ENCODE measurements at regions of chr1 and their contacts with region 1.

Region 1: GRCh38 chr1:234722904-234723720 is 113.1 kb upstream of the IRF2BP2 start:
- DNase-seq: peak; percentile 47
- ATAC-seq: no peak
- H3K4me3 Mint-ChIP-seq: peak overlapping the region; percentile 66
- H3K27ac Mint-ChIP-seq: peak overlapping the region; percentile 93
- H3K4me1 Mint-ChIP-seq: peaks cover 70% of the 10 kb centered on the region
- H3K27me3 Mint-ChIP-seq: no peaks in the 10 kb centered on the region

Region 2: DNA sequence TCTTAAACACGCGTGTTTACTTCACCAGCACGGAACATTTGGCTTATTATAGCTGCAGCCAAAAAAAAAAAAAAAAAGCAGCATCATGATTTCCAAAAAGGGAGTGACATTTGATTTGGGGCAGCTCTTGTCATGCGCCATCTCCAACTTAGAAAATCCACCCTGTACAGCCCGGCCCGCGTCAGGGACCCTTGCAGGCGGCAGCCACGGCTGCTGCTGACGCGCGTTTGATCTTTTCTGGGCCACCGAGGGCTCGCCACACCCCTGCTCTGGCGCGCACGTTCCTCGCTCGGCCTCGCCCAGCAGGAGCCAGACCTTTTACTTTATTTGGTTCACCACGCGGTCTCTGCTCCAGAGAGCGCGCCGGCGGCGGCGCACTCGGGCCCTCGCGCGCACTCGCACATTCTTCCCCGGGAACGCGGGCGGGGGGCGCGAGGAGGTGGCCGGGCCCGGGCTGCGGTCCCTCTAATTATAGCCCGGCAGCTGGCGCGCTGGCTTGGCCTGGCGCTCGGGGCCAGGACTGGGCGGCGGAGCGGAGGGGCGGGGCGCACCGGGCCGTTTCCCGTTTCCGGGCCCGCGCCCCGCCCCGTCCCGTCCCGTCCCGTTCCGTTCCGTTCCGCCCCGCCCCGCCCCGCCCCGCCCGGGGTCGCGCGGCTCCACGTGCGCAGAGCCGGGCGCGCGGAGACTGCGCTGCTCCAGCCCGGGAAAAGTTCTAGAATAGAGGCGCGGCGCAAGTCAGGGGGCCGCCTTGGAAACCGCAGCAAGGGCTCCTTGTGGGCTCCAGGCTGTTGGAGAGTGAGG is 123.3 kb before region 1 on chr1:
- CTCF ChIA-PET with region 1: interaction called, 11 read pairs
- POLR2A ChIA-PET with region 1: interaction called, 8 read pairs
- DNase-seq: peak; percentile 81
- ATAC-seq: peak; percentile 72
- H3K4me3 Mint-ChIP-seq: peak overlapping the region; percentile 85
- H3K27ac Mint-ChIP-seq: peak overlapping the region; percentile 95
- H3K4me1 Mint-ChIP-seq: peaks cover 57% of the 10 kb centered on the region
- H3K27me3 Mint-ChIP-seq: no peaks in the 10 kb centered on the region

Region 3: GRCh38 chr1:234772345-234773147 is 49.4 kb after region 1 on chr1:
- CTCF ChIA-PET with region 1: interaction called, 4 read pairs
- POLR2A ChIA-PET with region 1: interaction called, 23 read pairs
- DNase-seq: peak; percentile 93
- ATAC-seq: peak; percentile 93
- H3K4me3 Mint-ChIP-seq: peak overlapping the region; percentile 50
- H3K27ac Mint-ChIP-seq: peak overlapping the region; percentile 94
- H3K4me1 Mint-ChIP-seq: peaks cover 63% of the 10 kb centered on the region
- H3K27me3 Mint-ChIP-seq: no peaks in the 10 kb centered on the region

Region 4: GRCh38 chr1:234842726-234843641 is 119.9 kb after region 1 on chr1:
- CTCF ChIA-PET with region 1: interaction called, 11 read pairs
- POLR2A ChIA-PET with region 1: interaction called, 19 read pairs
- DNase-seq: peak; percentile 67
- ATAC-seq: peak; percentile 58
- H3K4me3 Mint-ChIP-seq: peak overlapping the region; percentile 47
- H3K27ac Mint-ChIP-seq: peak overlapping the region; percentile 89
- H3K4me1 Mint-ChIP-seq: peaks cover 85% of the 10 kb centered on the region
- H3K27me3 Mint-ChIP-seq: no peaks in the 10 kb centered on the region

Region 5: GRCh38 chr1:234978397-234979295 is 255.5 kb after region 1 on chr1:
- CTCF ChIA-PET with region 1: no interaction called
- POLR2A ChIA-PET with region 1: interaction called, 13 read pairs
- DNase-seq: peak; percentile 54
- ATAC-seq: peak; percentile 9
- H3K4me3 Mint-ChIP-seq: peak overlapping the region; percentile 5
- H3K27ac Mint-ChIP-seq: peak overlapping the region; percentile 91
- H3K4me1 Mint-ChIP-seq: peaks cover 72% of the 10 kb centered on the region
- H3K27me3 Mint-ChIP-seq: no peaks in the 10 kb centered on the region

Region 6: GRCh38 chr1:235147269-235147668 is 424.2 kb after region 1 on chr1:
- CTCF ChIA-PET with region 1: no interaction called
- POLR2A ChIA-PET with region 1: no interaction called
- DNase-seq: no peak
- ATAC-seq: no peak
- H3K4me3 Mint-ChIP-seq: no peak overlapping the region
- H3K27ac Mint-ChIP-seq: no peak overlapping the region
- H3K4me1 Mint-ChIP-seq: peaks cover 18% of the 10 kb centered on the region
- H3K27me3 Mint-ChIP-seq: no peaks in the 10 kb centered on the region